ENCODE measurements at regions of chr6 and their contacts with region 1.

Region 1: DNA sequence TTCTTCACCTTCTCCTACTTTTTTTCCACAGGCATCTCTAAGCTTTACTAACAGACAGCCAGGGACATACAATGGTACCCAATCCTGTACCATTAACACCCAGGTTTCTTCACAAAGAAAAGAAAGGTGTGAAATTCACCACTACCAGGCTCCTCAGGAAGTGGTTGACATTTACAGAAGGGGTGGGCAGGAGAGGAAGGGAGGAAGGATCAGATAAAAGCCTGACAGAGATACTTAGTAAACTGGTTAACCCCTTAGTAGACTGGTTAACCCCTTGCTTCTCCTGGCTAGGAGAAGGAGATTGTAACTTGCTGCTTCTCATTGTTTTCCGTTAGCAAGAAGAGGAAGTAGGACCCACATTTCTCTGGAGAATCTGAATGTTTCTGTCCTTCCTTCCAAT is 7.2 kb downstream of the SAMD3 start:
- DNase-seq: peak; percentile 63
- ATAC-seq: peak; percentile 82
- H3K4me3 Mint-ChIP-seq: peak overlapping the region; percentile 73
- H3K27ac Mint-ChIP-seq: peak overlapping the region; percentile 80
- H3K4me1 Mint-ChIP-seq: peaks cover 66% of the 10 kb centered on the region
- H3K27me3 Mint-ChIP-seq: no peaks in the 10 kb centered on the region
- CTCF ChIP-seq: no peak

Region 2: GRCh38 chr6:130034378-130035146 is 181.0 kb before region 1 on chr6:
- CTCF ChIA-PET with region 1: no interaction called
- POLR2A ChIA-PET with region 1: no interaction called
- intact Hi-C with region 1: no loop called
- DNase-seq: peak; percentile 66
- ATAC-seq: peak; percentile 81
- H3K4me3 Mint-ChIP-seq: peak overlapping the region; percentile 54
- H3K27ac Mint-ChIP-seq: peak overlapping the region; percentile 87
- H3K4me1 Mint-ChIP-seq: peaks cover 71% of the 10 kb centered on the region
- H3K27me3 Mint-ChIP-seq: no peaks in the 10 kb centered on the region
- CTCF ChIP-seq: no peak

Region 3: GRCh38 chr6:130183271-130184222 is 32.0 kb before region 1 on chr6:
- CTCF ChIA-PET with region 1: interaction called, 3 read pairs
- POLR2A ChIA-PET with region 1: interaction called, 3 read pairs
- intact Hi-C with region 1: loop called (anchors 5 kb)
- DNase-seq: peak; percentile 69
- ATAC-seq: peak; percentile 89
- H3K4me3 Mint-ChIP-seq: peak overlapping the region; percentile 67
- H3K27ac Mint-ChIP-seq: peak overlapping the region; percentile 94
- H3K4me1 Mint-ChIP-seq: peaks cover 47% of the 10 kb centered on the region
- H3K27me3 Mint-ChIP-seq: no peaks in the 10 kb centered on the region
- CTCF ChIP-seq: no peak

Region 4: DNA sequence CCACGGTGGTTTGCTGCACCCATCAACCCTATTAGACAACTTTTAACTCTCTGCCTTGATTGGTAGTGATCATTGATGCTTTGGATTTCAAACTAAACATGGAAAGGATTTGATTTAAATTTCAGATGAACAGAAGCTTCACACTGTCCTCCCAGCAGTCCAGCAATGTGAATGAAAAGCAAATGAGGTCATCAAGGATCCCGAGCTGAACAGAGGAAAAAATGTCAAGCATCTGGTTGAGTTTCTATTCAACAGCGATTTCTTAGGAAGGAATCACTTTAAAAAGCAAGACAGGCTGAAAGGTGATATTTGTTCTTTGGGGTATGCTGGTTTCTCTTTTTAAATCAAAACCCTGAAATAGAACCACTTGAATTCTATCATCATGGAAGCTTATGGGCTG is 17.8 kb after region 1 on chr6:
- CTCF ChIA-PET with region 1: no interaction called
- POLR2A ChIA-PET with region 1: no interaction called
- intact Hi-C with region 1: no loop called
- DNase-seq: no peak
- ATAC-seq: no peak
- H3K4me3 Mint-ChIP-seq: no peak overlapping the region
- H3K27ac Mint-ChIP-seq: no peak overlapping the region
- H3K4me1 Mint-ChIP-seq: no peaks in the 10 kb centered on the region
- H3K27me3 Mint-ChIP-seq: no peaks in the 10 kb centered on the region
- CTCF ChIP-seq: no peak

Measured in activated CD8-positive, alpha-beta T cell treated with anti-CD3 and anti-CD28 coated beads for 36 hours (primary cell).